Activated CD4-positive, alpha-beta T cell treated with anti-CD3 and anti-CD28 coated beads, Interleukin-2, amount 10 ng/mL, durations not matched to agents 24 days and 14 days (primary cell): ENCODE measurements at regions of chr16 and their contacts with region 1.

Region 1: DNA sequence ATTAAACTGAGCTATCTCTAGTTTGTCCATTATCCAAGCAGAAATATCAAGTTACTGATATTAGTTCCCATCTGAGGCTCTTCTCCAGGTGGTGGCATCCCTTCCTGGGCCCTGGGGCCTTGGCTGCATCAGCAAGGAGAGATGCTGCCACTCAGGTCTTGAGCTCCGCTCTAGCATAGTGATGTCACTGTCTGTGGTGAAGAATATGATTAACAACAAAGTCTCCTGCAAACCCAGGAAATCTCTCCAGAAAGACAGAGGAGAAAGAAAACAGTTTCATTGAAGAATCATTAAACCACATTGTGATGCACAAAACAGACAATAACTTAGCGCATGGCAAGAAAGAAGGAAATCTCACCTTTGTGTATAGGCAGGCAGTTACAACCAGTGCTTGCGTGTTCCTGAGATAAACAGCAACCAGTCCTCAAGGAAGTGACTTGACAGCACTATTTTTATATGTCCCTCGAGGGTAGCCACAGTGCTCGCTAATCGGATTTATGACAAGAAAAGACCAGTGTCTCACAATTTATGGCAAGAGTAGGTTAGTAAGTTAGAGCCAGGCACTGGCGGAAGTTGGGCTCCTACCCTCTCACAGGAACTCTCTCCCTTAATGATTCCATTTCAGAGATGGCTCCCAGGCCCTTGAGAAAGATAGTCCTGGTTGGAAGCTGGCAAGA is 151.1 kb downstream of the AHSP start:
- DNase-seq: no peak
- H3K4me3 Mint-ChIP-seq: no peak overlapping the region
- H3K27ac Mint-ChIP-seq: no peak overlapping the region
- H3K4me1 Mint-ChIP-seq: peaks cover 12% of the 10 kb centered on the region
- H3K27me3 Mint-ChIP-seq: no peaks in the 10 kb centered on the region

Region 2: GRCh38 chr16:31727553-31727952 is 48.8 kb after region 1 on chr16:
- intact Hi-C with region 1: loop called (anchors 10 kb)
- DNase-seq: no peak
- H3K4me3 Mint-ChIP-seq: no peak overlapping the region
- H3K27ac Mint-ChIP-seq: no peak overlapping the region
- H3K4me1 Mint-ChIP-seq: peaks cover 3% of the 10 kb centered on the region
- H3K27me3 Mint-ChIP-seq: no peaks in the 10 kb centered on the region